Cardiac septum (tissue), 1 donor: ENCODE measurements at regions of chr4 and their contacts with region 1.

Region 1: GRCh38 chr4:10018818-10019461 is 2.4 kb downstream of the SLC2A9 start:
- DNase-seq: peak; percentile 98

Region 2: DNA sequence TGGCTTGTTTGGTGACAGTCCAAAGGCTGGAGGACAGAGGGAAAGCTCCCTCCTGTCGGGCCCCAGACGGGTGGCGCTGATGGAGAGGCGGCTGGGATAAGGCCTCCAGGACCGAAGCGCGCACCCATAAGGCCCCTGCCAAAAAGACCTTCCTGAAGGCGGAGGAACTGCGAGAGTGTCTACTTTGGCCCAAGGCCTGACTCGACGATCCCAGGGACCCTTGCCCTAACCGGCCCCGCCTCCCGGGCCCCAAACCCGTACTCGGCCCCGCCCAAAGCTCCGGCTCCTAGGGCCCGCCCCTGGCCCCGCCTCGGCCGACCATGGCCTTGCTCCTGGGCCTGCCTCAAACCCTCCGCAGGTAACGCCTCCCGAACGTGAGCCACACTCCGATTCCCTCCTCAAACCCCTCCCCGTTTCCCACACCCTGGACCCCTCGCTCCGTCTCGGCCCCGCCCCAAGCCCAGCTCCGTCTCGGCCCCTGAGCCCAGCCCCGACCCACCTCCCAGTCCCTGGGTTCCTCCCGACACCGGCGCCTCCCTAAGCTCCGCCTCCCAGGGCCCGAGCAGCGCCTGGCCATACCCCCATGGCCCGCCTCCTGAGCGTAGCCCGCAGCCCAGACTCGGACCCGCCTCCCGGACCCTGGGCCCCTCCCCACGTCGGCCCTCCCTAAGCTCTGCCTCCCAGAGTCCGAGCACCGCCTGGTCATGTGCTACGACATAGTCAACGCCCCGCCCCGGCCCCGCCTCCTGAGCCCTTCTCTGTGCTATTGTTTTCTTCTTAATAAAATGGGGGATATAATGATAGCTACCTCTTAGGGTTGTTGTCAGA is 327.5 kb before region 1 on chr4:
- intact Hi-C with region 1: loop called (anchors 5 kb)
- DNase-seq: peak; percentile 97

Region 3: GRCh38 chr4:9762823-9763475 is 256.0 kb before region 1 on chr4:
- intact Hi-C with region 1: loop called (anchors 1 kb)
- DNase-seq: no peak

Region 4: GRCh38 chr4:9904976-9905587 is 113.9 kb before region 1 on chr4:
- intact Hi-C with region 1: loop called (anchors 5 kb)
- DNase-seq: no peak

Region 5: DNA sequence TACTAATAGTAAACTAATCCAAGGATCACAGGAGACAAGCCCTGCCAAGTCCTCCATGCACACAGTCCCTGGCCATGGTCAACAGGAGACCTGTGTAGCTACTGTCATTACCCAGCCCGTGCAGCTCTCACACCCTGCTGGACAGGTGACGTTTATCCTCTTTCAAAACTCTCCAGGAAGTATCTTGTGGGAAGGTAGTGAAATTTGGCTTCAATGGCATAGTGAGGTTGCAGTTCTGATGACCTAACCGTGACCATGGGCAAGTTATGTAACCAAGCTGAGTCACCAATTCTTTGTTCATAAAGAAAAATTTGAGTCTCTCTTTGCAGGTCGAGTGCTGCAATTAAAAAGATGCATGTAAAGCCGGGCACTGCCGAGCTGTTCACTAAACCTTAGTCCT is 13.7 kb after region 1 on chr4:
- intact Hi-C with region 1: loop called (anchors 1 kb)
- DNase-seq: no peak

Region 6: GRCh38 chr4:10063544-10064300 is 44.8 kb after region 1 on chr4:
- intact Hi-C with region 1: loop called (anchors 1 kb)
- DNase-seq: no peak

Region 7: DNA sequence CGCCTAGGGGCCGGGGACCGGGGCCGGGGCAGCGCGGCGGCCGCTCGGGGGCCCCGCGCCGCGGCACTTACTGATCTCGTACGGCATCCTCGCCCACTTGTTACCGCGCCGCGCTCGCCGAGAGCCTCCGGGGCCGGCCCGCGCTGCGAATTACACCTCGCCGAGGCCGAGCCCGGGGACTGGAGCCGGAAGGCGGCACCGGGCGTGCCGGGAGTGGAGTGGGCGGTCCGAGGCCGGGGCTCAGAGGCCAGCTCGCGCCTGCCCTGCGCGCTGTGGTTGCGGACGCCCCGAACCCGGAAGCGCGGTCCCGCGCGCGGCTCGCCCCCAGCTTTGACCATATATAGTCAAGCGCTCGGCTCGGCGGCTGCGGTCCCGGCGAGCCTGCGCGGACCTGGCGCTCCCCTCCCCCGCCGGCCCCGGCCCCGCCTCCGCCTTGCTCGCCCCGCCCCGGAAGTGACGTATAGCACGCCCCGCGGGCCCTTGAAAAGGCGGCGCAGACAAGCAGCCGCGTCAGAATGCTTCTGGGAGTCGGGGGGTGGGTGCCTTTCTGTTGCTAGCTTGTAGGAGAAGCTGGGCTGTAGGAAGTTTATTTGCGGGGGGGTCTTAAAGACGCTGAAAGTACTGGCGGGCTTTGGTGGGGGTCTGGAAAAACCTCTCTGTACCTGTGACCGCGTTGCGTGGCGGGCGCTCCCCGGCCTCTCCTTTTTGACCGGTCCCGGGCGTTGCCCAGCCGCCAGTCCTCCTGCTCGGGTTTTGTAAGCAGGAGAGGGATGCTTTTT is 97.8 kb after region 1 on chr4 and contains the start of gene WDR1:
- intact Hi-C with region 1: loop called (anchors 2 kb)
- DNase-seq: peak; percentile 99
- total RNA-seq, gene WDR1: 245 TPM